Activated CD4-positive, alpha-beta T cell treated with anti-CD3 and anti-CD28 coated beads, Interleukin-2, amount 10 ng/mL, durations not matched to agents 24 days and 14 days (primary cell): ENCODE measurements at regions of chr7 and their contacts with region 1.

Region 1: DNA sequence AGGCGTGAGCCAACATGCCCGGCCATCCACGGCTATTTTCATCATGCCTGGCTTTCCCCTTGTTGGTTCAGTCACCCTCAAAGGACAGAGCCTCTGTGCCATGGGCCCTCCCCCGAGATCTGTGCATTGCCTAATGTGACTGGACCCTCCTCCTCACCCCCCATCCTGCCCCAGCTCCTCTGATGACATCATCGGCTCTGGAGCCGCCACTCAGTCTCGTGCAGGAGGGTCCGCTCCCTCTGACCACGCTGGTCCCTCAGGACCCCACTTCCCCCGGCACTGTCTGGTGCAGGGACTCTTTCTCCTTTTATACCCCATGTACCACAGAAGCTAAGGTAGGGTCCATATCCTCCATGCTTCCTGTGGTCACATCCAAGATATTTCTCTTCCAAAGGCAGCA is 33.2 kb upstream of the BAIAP2L1 start:
- DNase-seq: no peak
- H3K4me3 Mint-ChIP-seq: no peak overlapping the region
- H3K27ac Mint-ChIP-seq: no peak overlapping the region
- H3K4me1 Mint-ChIP-seq: peaks cover 5% of the 10 kb centered on the region
- H3K27me3 Mint-ChIP-seq: no peaks in the 10 kb centered on the region

Region 2: DNA sequence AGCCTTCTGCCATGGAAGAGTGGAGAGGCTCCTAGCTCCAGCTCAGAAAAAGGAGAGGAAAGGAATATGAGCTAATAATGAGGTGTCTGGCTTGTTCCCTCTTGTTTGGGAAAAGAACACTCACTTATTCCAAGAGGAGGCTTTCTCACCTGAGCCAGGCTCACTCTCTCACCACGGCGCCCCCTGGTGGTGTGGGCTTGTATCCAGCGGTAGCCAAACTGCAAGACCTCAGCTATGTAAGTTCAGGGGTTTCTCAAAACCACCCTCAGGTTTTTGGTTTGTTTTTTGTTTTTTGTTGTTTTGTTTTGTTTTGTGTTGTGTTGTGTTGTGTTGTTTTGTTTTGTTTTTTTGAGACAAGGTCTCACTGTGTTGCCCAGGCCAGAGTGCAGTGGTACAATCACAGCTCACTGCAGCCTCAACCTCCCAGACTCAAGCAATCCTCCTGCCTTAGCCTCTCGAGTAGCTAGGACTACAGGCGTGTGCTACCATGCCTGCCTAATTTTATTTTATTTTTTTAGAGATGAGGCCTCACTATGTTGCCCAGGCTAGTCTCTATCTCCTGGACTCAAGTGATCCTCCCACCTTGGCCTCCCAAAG is 311.7 kb after region 1 on chr7:
- intact Hi-C with region 1: loop called (anchors 1 kb)
- DNase-seq: peak; percentile 90
- H3K4me3 Mint-ChIP-seq: no peak overlapping the region
- H3K27ac Mint-ChIP-seq: no peak overlapping the region
- H3K4me1 Mint-ChIP-seq: no peaks in the 10 kb centered on the region
- H3K27me3 Mint-ChIP-seq: no peaks in the 10 kb centered on the region